ENCODE measurements at regions of chr12 and their contacts with region 1.

Region 1: GRCh38 chr12:98998697-98999299 is 353.7 kb downstream of the APAF1 start:
- DNase-seq: no peak
- ATAC-seq: no peak

Region 2: DNA sequence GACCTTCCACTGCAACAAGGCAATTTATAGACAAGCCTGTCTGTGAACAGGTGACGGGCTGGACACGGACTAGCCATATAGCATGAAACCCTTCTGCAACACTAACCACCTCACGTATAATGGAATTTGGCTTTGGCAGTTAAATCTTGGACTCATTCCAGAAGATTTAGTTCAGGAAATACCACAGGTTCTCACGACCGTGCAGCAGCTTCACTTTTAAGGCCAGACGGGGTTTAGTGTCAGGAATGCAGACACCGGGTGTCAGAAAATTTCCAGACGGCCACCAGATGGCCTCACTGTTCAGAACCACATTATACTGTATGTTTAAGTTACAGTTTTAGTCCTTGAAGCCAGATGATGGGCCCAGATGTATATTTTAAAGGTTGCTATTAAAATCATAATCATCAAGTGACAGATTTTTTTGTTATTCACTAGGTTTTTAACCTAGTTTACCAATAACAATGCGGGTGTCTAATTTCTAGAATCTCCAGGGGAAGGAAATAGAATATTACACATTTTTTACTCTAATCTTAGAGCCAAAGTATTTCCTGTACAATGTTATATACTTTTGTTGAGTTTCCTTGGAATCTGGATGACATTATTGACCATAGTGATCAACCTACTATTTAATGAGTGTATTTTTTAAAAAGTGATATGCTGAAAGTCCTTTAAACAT is 573.9 kb before region 1 on chr12:
- intact Hi-C with region 1: loop called (anchors 10 kb)
- DNase-seq: no peak
- ATAC-seq: peak; percentile 63

Region 3: DNA sequence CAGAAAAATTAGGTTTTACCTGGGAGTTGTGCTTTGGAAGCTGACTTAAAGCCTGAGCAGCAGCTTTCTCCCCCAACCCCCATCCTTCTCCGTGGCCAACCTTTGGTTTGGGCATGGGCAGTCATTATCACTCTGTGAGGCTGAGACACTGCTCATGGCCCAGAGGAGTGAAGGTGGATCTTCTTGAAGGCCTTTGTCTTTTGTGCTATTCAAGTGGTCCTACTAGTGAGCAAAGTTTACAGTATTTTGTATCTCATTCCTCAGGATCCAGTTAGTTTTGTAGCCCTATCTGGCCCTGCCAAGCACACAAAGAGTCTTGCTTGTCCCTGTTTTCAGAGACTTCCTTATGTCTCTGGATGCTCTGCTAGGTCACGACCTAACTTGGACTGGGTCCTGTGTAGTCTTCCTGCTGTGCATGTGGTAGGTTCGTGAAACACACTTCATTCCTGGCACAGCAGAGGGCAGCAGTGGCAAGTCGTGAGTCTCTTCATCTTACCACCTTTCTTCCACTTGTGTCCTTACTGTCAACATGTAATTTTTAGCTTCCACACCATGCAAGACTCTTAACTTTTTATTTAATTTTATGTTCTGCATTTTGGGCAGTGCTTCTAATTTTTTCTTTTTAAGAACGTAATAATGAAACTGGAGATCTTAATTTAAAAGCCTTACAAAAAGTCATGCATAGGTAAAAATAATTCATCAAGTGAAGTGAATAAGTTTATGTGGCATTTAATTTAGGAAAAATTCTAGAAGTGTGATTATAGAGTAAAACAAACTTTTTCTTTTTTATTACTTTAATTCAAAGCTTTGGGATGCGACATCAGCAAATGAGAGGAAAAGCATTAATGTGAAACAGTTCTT is 300.0 kb before region 1 on chr12:
- intact Hi-C with region 1: loop called (anchors 2 kb)
- DNase-seq: no peak
- ATAC-seq: peak; percentile 90